Ovary (tissue), 10 donors: ENCODE measurements at regions of chr10 and their contacts with region 1.

Region 1: DNA sequence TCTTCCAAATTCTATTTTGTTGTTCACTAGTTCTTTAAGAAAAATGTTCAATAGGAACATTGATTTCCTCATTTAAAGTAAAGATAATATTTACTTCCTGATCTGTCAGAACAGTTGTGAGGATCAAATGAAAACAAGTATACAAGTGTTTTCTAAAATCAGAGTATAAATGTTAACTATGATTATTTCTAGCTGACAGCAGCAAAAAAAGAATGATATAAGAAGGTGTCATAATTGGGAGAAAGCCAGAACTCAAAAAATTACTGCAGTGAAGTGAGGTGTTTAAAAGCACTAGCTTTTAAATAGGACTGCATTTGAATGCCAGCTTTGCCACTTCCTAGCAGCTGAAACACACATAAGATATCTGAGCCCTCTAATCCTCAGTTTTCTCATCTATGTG is 283.3 kb downstream of the RNLS start:
- DNase-seq: no peak
- H3K4me3 ChIP-seq: no peak overlapping the region
- H3K27ac ChIP-seq: no peak overlapping the region
- H3K4me1 ChIP-seq: no peaks in the 10 kb centered on the region
- H3K27me3 ChIP-seq: no peaks in the 10 kb centered on the region
- CTCF ChIP-seq: no peak
- EP300 ChIP-seq: no peak
- POLR2A ChIP-seq: no peak

Region 2: DNA sequence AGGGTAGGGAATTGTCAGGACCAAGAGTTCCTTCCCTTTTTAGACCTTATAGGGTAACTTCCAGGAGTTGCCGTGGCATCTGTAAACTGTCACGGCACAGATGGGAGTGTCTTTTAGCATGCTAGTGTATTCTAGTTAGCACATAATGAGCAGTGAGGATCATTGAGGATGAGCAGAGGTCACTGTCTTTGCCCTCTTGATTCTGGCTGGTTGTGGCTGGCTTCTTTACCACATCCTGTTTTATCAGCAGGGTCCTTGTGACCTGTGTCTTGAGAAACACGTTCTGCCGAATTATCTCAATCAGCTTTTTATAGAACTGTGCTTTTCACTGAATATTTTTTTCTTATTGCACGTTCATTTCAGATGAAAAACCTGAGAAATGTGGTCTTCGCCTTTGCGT is 753.6 kb before region 1 on chr10:
- intact Hi-C with region 1: no loop called
- DNase-seq: peak in 1 of 5 donors; percentile 41
- H3K4me3 ChIP-seq: no peak overlapping the region
- H3K27ac ChIP-seq: no peak overlapping the region
- H3K4me1 ChIP-seq: peaks cover 25% of the 10 kb centered on the region
- H3K27me3 ChIP-seq: no peaks in the 10 kb centered on the region
- CTCF ChIP-seq: no peak
- EP300 ChIP-seq: no peak
- POLR2A ChIP-seq: no peak

Region 3: GRCh38 chr10:88318803-88319202 is 19.0 kb after region 1 on chr10:
- intact Hi-C with region 1: loop called in 1 of 4 experiments (anchors 1 kb)
- DNase-seq: no peak
- H3K4me3 ChIP-seq: no peak overlapping the region
- H3K27ac ChIP-seq: no peak overlapping the region
- H3K4me1 ChIP-seq: no peaks in the 10 kb centered on the region
- H3K27me3 ChIP-seq: no peaks in the 10 kb centered on the region
- CTCF ChIP-seq: no peak
- EP300 ChIP-seq: no peak
- POLR2A ChIP-seq: no peak

Region 4: GRCh38 chr10:88437411-88437810 is 137.6 kb after region 1 on chr10:
- intact Hi-C with region 1: no loop called
- DNase-seq: no peak
- H3K4me3 ChIP-seq: no peak overlapping the region
- H3K27ac ChIP-seq: no peak overlapping the region
- H3K4me1 ChIP-seq: peaks cover 2% of the 10 kb centered on the region
- H3K27me3 ChIP-seq: no peaks in the 10 kb centered on the region
- CTCF ChIP-seq: no peak
- EP300 ChIP-seq: no peak
- POLR2A ChIP-seq: no peak